Left lung (tissue), 14 donors: ENCODE measurements at regions of chr12 and their contacts with region 1.

Region 1: DNA sequence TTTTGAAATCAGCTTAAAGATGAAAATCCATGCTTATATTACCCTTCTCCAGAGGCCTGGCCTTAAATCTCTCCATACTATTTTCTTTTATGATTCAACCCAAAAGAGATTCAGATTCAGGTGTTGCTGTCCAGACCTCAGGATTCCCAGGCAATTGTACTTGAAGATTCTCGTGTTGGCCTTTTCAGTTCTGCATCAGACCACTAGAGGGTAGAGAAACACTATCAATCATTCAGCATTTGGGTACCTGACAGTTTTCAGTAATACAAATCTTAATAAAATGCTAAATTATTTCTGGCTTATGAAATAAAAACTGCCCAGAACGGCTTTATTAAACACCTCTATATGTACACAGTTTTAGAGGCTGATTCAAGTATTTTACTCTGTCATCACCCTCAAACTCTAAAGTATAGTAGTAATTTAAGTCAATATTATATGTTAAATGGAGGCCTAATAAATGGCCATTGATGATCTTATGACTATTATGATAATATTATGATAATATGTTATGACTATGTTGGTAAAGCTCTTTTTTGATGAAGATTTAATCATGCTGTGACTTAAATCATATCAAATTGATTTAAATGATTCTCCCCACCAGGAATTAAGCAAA is 301.1 kb downstream of the DUSP6 start:
- DNase-seq: peak in 2 of 4 donors; percentile 63 to 71
- ATAC-seq: peak; percentile 89
- H3K4me3 ChIP-seq: no peak overlapping the region
- H3K27ac ChIP-seq: no peak overlapping the region
- H3K4me1 ChIP-seq: peaks cover 0 to 16% of the 10 kb centered on the region in 2 donors
- H3K27me3 ChIP-seq: no peaks in the 10 kb centered on the region
- CTCF ChIP-seq: peak; percentile 86 to 90

Region 2: GRCh38 chr12:89461649-89462612 is 410.8 kb after region 1 on chr12:
- intact Hi-C with region 1: loop called in 1 of 2 experiments (anchors 5 kb)
- DNase-seq: peak in 1 of 4 donors; percentile 46
- ATAC-seq: peak; percentile 97
- H3K4me3 ChIP-seq: no peak overlapping the region
- H3K27ac ChIP-seq: peak overlapping the region; percentile 56 to 75
- H3K4me1 ChIP-seq: peaks cover 0 to 13% of the 10 kb centered on the region in 2 donors
- H3K27me3 ChIP-seq: no peaks in the 10 kb centered on the region
- CTCF ChIP-seq: peak; percentile 33 to 45